Activated CD4-positive, alpha-beta T cell treated with anti-CD3 and anti-CD28 coated beads for 36 hours (primary cell): ENCODE measurements at regions of chr2 and their contacts with region 1.

Region 1: GRCh38 chr2:34480366-34480765 is 881.3 kb upstream of the FAM98A start:
- DNase-seq: no peak
- ATAC-seq: no peak
- H3K4me3 Mint-ChIP-seq: no peak overlapping the region
- H3K27ac Mint-ChIP-seq: no peak overlapping the region
- H3K4me1 Mint-ChIP-seq: no peaks in the 10 kb centered on the region
- H3K27me3 Mint-ChIP-seq: no peaks in the 10 kb centered on the region

Region 2: GRCh38 chr2:34266908-34267697 is 213.3 kb before region 1 on chr2:
- CTCF ChIA-PET with region 1: no interaction called
- POLR2A ChIA-PET with region 1: no interaction called
- intact Hi-C with region 1: no loop called
- DNase-seq: no peak
- ATAC-seq: peak; percentile 55
- H3K4me3 Mint-ChIP-seq: no peak overlapping the region
- H3K27ac Mint-ChIP-seq: no peak overlapping the region
- H3K4me1 Mint-ChIP-seq: no peaks in the 10 kb centered on the region
- H3K27me3 Mint-ChIP-seq: no peaks in the 10 kb centered on the region

Region 3: DNA sequence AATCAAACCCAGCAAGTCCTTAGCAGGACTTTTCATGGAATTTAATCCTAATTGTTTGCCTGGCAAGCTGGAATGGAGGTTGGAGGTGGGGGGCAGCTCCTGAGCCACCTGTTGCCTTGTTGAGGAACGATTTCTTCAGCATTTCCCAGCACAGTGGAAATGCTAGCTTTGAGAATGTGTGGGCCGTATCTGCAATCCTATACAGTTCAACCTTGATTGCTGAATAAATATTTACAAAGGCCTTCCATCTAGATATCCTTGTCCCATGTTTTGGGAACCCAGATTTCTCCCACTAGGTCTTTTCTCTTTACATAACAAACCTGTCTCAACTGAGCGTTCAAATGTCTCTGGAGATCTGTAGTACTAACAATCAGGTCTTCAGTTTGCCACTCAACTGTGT is 45.4 kb before region 1 on chr2:
- CTCF ChIA-PET with region 1: no interaction called
- POLR2A ChIA-PET with region 1: no interaction called
- intact Hi-C with region 1: loop called in 1 of 2 experiments (anchors 2 kb)
- DNase-seq: no peak
- ATAC-seq: no peak
- H3K4me3 Mint-ChIP-seq: no peak overlapping the region
- H3K27ac Mint-ChIP-seq: no peak overlapping the region
- H3K4me1 Mint-ChIP-seq: no peaks in the 10 kb centered on the region
- H3K27me3 Mint-ChIP-seq: no peaks in the 10 kb centered on the region